H1 (cell line): ENCODE measurements at regions of chr14 and their contacts with region 1.

Region 1: DNA sequence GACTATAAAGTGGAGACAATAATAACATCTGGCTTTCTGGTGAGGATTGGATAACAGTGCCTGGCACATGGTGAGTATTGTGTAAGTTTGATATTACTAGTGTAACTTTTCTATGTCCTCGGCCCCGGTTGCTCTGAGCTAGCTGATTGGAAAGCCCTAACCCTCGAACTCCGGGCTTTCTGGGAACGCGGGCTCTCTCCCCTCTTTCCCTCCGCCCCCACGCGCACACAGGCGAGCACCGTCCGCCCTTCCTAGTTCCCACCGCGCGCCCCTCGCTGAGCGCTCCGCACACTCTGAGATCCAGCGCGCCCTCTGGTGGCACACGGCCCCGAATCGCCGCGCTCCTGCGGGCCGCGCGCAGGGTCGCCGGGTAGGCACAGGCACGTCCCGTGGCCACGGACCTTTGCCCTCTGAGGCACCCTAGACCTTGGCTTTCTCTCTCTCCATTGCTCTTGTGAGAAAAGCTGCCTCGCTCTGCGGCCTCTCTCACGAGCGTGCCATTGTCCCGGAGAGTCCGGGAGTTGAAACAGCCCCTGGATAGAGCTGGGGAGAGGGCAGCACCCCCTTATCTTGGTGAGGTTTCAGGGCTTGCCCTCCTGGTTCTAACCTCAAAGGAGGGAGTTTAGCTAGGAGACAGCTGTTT is 23.2 kb upstream of the ESRRB start:
- DNase-seq: peak; percentile 36 to 97
- H3K4me3 ChIP-seq: peak overlapping the region in 1 of 4 experiments; percentile 26; a peak in 1 of 8 replicates
- H3K27ac ChIP-seq: no peak overlapping the region
- H3K4me1 ChIP-seq: peaks cover 0 to 6% (median 3%) of the 10 kb centered on the region in 4 experiments; a peak in 4 of 7 replicates
- H3K27me3 ChIP-seq: peaks cover 2 to 7% (median 5%) of the 10 kb centered on the region in 4 experiments; a peak in 5 of 7 replicates
- CTCF ChIP-seq: peak; percentile 85 to 96 (median 89)
- EP300 ChIP-seq: no peak
- POLR2A ChIP-seq: no peak
- RAD21 ChIP-seq: peak; percentile 89 to 94

Region 2: DNA sequence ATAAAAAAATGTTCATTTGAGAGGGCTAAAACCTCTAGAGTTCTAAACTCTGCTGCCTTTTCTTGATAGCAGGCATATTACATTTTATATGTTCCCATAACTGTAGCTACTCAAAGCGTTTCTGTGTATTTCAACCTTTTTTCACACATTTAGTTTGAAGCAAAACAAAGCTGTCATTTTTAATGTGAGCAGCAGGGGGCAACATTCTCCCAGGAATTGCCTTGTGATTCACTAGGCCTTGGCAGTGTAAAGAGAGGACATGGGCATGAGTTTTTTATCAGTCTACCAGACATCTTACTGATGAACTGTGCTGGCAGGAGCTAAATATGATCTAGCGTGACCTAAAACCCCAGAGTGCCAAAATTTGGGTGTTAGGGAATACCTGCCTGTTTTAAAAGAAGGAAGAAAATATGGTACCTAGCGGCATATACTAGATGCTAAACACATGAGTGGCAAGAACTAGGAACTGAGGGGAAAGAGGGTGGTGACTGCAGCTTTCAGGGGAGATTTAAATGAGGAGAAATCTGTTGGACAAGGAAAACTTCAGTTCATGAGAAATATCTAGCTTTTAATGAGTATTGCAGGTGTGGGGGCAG is 301.9 kb before region 1 on chr14:
- CTCF ChIA-PET with region 1: interaction called, 32 read pairs
- POLR2A ChIA-PET with region 1: no interaction called
- DNase-seq: peak in 1 of 2 experiments; percentile 79
- H3K4me3 ChIP-seq: no peak overlapping the region
- H3K27ac ChIP-seq: no peak overlapping the region
- H3K4me1 ChIP-seq: peaks cover 2 to 11% (median 5%) of the 10 kb centered on the region in 4 experiments
- H3K27me3 ChIP-seq: no peaks in the 10 kb centered on the region
- CTCF ChIP-seq: peak in 2 of 3 experiments; percentile 77 to 83; a peak in 3 of 4 replicates
- EP300 ChIP-seq: no peak
- POLR2A ChIP-seq: no peak
- RAD21 ChIP-seq: peak; percentile 95 to 96

Region 3: GRCh38 chr14:76302959-76303587 is 49.7 kb before region 1 on chr14:
- CTCF ChIA-PET with region 1: interaction called, 12 read pairs
- POLR2A ChIA-PET with region 1: no interaction called
- DNase-seq: peak in 1 of 2 experiments; percentile 16
- H3K4me3 ChIP-seq: no peak overlapping the region
- H3K27ac ChIP-seq: no peak overlapping the region
- H3K4me1 ChIP-seq: no peaks in the 10 kb centered on the region; a peak in 1 of 7 replicates
- H3K27me3 ChIP-seq: no peaks in the 10 kb centered on the region
- CTCF ChIP-seq: no peak
- EP300 ChIP-seq: no peak
- POLR2A ChIP-seq: no peak
- RAD21 ChIP-seq: no peak

Region 4: DNA sequence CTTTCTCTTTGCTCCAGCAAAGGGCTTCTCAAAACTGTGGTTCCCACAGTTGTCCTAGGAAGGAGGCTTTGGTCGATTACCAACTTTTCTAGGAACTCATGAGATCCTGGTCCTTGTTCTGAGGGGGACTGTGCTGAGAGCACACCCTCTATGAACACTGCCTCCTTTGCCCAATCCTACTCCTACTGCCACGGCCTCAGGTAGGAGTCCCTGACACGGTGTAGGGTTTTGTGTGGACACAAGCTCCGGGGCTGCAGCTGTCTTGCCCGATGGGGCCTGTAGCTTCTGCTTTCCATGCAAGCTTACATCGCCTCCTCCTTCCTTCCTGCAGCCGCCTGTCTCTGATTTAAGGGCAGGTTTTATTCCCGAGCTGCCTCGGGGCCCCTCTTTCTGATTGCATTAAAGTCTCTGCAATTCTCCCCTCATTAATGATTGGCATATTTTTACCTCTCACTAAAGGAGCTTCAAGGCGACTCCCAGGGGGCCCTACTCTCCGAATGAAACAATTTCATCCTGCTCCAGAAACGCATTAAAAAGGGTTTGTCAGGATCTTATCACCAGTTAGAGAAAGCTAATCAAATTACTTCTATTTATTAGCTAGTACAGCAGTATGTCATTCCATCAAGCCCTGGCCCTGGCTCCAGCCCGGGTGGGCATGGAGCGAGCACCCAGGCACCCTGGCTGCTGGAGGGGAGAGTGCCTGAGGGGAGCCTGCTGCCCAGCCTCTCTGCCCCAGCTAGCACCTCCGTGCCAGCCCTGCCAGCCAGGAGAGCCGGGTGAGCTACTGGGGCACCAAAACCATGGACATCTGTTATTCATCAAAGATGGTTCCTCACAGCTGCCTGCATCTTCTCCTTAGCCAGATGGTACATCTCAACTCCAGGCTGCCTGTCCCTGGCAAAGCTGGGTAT is 14.9 kb before region 1 on chr14:
- CTCF ChIA-PET with region 1: interaction called, 13 read pairs
- POLR2A ChIA-PET with region 1: no interaction called
- DNase-seq: no peak
- H3K4me3 ChIP-seq: no peak overlapping the region
- H3K27ac ChIP-seq: no peak overlapping the region
- H3K4me1 ChIP-seq: peaks cover 0 to 14% (median 2%) of the 10 kb centered on the region in 4 experiments; a peak in 4 of 7 replicates
- H3K27me3 ChIP-seq: no peaks in the 10 kb centered on the region; a peak in 1 of 7 replicates
- CTCF ChIP-seq: no peak
- EP300 ChIP-seq: no peak
- POLR2A ChIP-seq: no peak
- RAD21 ChIP-seq: no peak

Region 5: GRCh38 chr14:76396714-76397187 is 44.0 kb after region 1 on chr14:
- CTCF ChIA-PET with region 1: interaction called, 10 read pairs
- POLR2A ChIA-PET with region 1: no interaction called
- DNase-seq: no peak
- H3K4me3 ChIP-seq: no peak overlapping the region
- H3K27ac ChIP-seq: no peak overlapping the region
- H3K4me1 ChIP-seq: no peaks in the 10 kb centered on the region; a peak in 1 of 7 replicates
- H3K27me3 ChIP-seq: no peaks in the 10 kb centered on the region
- CTCF ChIP-seq: no peak
- EP300 ChIP-seq: no peak
- POLR2A ChIP-seq: no peak
- RAD21 ChIP-seq: no peak

Region 6: DNA sequence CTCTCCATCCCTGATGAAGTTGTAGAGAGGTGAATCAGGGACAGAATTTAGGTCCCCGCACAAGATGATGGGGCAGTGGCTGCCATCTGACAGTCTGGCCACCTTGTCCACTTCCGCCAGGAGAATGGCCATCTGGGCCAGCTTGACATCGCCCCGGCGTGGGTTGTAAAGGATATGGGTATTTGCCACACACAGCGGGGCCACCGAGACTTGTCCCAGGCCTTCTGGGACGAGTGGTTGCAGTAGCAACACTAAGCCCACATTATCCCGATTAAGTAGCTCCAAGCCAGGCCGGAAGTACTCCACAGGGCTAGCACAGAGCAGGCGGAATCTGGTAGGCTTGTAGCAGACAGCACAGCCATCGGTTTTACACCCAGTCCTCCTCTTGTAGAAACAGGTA is 453.7 kb after region 1 on chr14:
- CTCF ChIA-PET with region 1: no interaction called
- POLR2A ChIA-PET with region 1: no interaction called
- DNase-seq: no peak
- H3K4me3 ChIP-seq: no peak overlapping the region
- H3K27ac ChIP-seq: no peak overlapping the region
- H3K4me1 ChIP-seq: peaks cover 0 to 4% (median 1%) of the 10 kb centered on the region in 4 experiments; a peak in 3 of 7 replicates
- H3K27me3 ChIP-seq: no peaks in the 10 kb centered on the region
- CTCF ChIP-seq: no peak
- EP300 ChIP-seq: no peak
- POLR2A ChIP-seq: no peak
- RAD21 ChIP-seq: no peak